H1 (cell line): ENCODE measurements at regions of chr2 and their contacts with region 1.

Region 1: DNA sequence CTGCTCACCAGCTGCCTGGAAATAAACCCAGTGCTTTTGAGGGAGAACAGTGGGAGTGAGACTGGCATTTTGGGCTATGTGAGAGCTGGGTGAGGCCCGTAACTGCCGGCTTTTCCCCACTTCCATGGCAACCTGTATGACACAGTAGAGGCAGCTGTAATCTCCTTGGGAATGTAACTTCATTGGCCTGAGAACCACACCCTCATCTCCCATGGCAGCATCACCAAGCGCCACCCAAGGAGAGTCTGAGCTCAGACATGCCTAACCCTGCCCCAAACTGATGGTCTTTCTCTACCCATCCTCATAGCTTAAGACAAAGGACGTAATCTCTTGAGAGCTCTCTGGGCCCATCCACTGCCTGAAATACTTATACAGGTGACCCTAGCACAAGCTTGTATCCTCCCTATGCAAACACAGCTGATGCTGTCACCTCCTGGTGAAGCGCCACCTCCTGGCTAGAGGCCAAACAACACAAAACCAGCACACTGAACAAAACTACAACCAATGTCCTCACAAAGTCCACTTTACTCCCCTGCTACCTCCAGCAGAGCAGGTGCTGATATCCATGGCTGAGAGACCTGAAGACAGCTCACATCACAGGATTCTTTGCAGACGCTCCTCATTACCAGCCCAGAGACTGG is 763.4 kb upstream of the NRXN1 start:
- DNase-seq: peak; percentile 17 to 88
- H3K4me3 ChIP-seq: no peak overlapping the region
- H3K27ac ChIP-seq: no peak overlapping the region
- H3K4me1 ChIP-seq: peaks cover 0 to 2% (median 0%) of the 10 kb centered on the region in 4 experiments; a peak in 1 of 7 replicates
- H3K27me3 ChIP-seq: no peaks in the 10 kb centered on the region
- CTCF ChIP-seq: peak; percentile 57 to 86 (median 76)
- EP300 ChIP-seq: no peak
- POLR2A ChIP-seq: no peak
- RAD21 ChIP-seq: peak; percentile 60 to 70

Region 2: GRCh38 chr2:51620796-51621195 is 174.6 kb before region 1 on chr2:
- CTCF ChIA-PET with region 1: no interaction called
- POLR2A ChIA-PET with region 1: no interaction called
- DNase-seq: no peak
- H3K4me3 ChIP-seq: no peak overlapping the region
- H3K27ac ChIP-seq: no peak overlapping the region
- H3K4me1 ChIP-seq: no peaks in the 10 kb centered on the region
- H3K27me3 ChIP-seq: no peaks in the 10 kb centered on the region
- CTCF ChIP-seq: no peak
- EP300 ChIP-seq: no peak
- POLR2A ChIP-seq: no peak
- RAD21 ChIP-seq: no peak

Region 3: GRCh38 chr2:51710222-51710621 is 85.1 kb before region 1 on chr2:
- CTCF ChIA-PET with region 1: interaction called, 15 read pairs
- POLR2A ChIA-PET with region 1: no interaction called
- DNase-seq: peak; percentile 25 to 63
- H3K4me3 ChIP-seq: no peak overlapping the region
- H3K27ac ChIP-seq: no peak overlapping the region
- H3K4me1 ChIP-seq: peaks cover 0 to 2% (median 0%) of the 10 kb centered on the region in 4 experiments; a peak in 1 of 7 replicates
- H3K27me3 ChIP-seq: no peaks in the 10 kb centered on the region
- CTCF ChIP-seq: peak; percentile 64 to 89 (median 70)
- EP300 ChIP-seq: no peak
- POLR2A ChIP-seq: no peak
- RAD21 ChIP-seq: peak; percentile 96

Region 4: GRCh38 chr2:51722311-51722710 is 73.1 kb before region 1 on chr2:
- CTCF ChIA-PET with region 1: no interaction called
- POLR2A ChIA-PET with region 1: no interaction called
- DNase-seq: no peak
- H3K4me3 ChIP-seq: no peak overlapping the region
- H3K27ac ChIP-seq: no peak overlapping the region
- H3K4me1 ChIP-seq: 0 out of 7 replicates have a peak, but pooled peaks cover 0 to 2% (median 0%) of the 10 kb centered on the region in 4 experiments
- H3K27me3 ChIP-seq: no peaks in the 10 kb centered on the region
- CTCF ChIP-seq: no peak
- EP300 ChIP-seq: no peak
- POLR2A ChIP-seq: no peak
- RAD21 ChIP-seq: no peak

Region 5: DNA sequence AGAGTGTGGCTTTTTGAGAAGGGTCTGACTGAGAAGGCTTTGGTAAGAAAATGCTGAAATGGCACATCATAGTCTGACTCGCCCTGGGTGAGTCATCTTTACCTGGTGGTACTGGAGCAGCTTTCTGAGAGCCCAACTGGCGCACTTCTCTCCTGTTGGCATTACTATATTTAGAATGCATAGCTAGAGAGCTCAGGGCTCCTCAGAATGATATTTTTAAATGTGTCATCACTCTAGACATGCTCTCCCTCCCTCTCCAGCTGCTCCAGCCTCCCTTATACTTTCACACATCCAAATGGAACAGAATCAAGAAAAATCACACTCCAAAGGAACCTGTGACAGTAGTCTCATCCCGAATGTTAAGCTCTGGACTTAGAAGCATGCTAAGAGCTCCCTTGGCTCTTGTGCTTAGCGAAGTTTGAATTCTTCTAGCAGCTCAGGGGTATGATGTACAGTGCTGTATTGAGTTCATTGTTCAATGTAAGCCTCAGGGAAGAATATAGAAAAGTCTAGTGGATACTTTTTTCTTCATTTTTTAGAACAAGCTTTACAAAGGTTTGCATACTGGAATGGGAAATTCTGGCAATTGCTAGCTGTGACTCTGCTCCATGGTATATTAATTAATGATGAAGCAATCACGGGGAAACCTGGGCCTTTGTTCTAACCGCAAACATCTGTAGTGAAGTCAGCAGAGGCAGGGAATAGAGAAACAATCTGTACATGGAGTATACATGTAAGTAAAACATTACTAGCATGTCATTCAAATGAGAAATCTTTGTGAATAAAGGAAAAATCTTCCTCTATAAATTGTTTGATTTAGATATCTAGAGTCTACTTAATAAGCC is 12.2 kb before region 1 on chr2:
- CTCF ChIA-PET with region 1: interaction called, 48 read pairs
- POLR2A ChIA-PET with region 1: no interaction called
- DNase-seq: no peak
- H3K4me3 ChIP-seq: no peak overlapping the region
- H3K27ac ChIP-seq: no peak overlapping the region
- H3K4me1 ChIP-seq: no peaks in the 10 kb centered on the region
- H3K27me3 ChIP-seq: no peaks in the 10 kb centered on the region
- CTCF ChIP-seq: no peak
- EP300 ChIP-seq: no peak
- POLR2A ChIP-seq: no peak
- RAD21 ChIP-seq: no peak

Region 6: DNA sequence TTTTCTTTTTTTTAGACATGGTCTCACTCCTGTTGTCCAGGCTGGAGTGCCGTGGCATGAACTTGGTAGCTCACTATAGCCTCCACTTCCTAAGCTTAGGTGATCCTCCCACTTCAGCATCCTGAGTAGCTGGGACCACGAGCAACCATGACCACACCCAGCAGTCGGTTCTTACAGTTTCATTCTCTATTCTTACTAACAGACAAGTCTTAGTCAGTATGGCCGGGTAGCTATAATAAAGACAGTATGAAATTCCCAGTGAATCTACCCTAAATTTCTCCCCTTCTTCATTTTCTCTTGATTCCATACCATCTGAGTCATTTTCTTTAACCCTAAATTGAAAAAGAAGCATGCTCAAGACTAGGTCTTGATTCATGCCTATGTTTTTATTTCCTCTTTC is 11.9 kb after region 1 on chr2:
- CTCF ChIA-PET with region 1: interaction called, 22 read pairs
- POLR2A ChIA-PET with region 1: no interaction called
- DNase-seq: no peak
- H3K4me3 ChIP-seq: no peak overlapping the region
- H3K27ac ChIP-seq: no peak overlapping the region
- H3K4me1 ChIP-seq: no peaks in the 10 kb centered on the region
- H3K27me3 ChIP-seq: no peaks in the 10 kb centered on the region
- CTCF ChIP-seq: no peak
- EP300 ChIP-seq: no peak
- POLR2A ChIP-seq: no peak
- RAD21 ChIP-seq: no peak

Region 7: GRCh38 chr2:51960841-51961335 is 165.5 kb after region 1 on chr2:
- CTCF ChIA-PET with region 1: no interaction called
- POLR2A ChIA-PET with region 1: no interaction called
- DNase-seq: no peak
- H3K4me3 ChIP-seq: no peak overlapping the region
- H3K27ac ChIP-seq: no peak overlapping the region
- H3K4me1 ChIP-seq: no peaks in the 10 kb centered on the region
- H3K27me3 ChIP-seq: peaks cover 0 to under 1% (median 0%) of the 10 kb centered on the region in 4 experiments; a peak in 1 of 7 replicates
- CTCF ChIP-seq: no peak
- EP300 ChIP-seq: no peak
- POLR2A ChIP-seq: no peak
- RAD21 ChIP-seq: no peak

Region 8: GRCh38 chr2:52639692-52640091 is 844.3 kb after region 1 on chr2:
- CTCF ChIA-PET with region 1: no interaction called
- POLR2A ChIA-PET with region 1: no interaction called
- DNase-seq: no peak
- H3K4me3 ChIP-seq: no peak overlapping the region
- H3K27ac ChIP-seq: no peak overlapping the region
- H3K4me1 ChIP-seq: no peaks in the 10 kb centered on the region
- H3K27me3 ChIP-seq: no peaks in the 10 kb centered on the region
- CTCF ChIP-seq: no peak
- EP300 ChIP-seq: no peak
- POLR2A ChIP-seq: no peak
- RAD21 ChIP-seq: no peak